Activated T-helper 2 cell treated with anti-CD3 and anti-CD28 coated beads, Interferon-gamma antibody, Interleukin-2, Interleukin-4, amounts not matched to agents 10 μg/mL and 5 μg/mL and 100 μg/mL, durations not matched to agents 14 hours and 24 hours and 36 hours (primary cell): ENCODE measurements at regions of chr2 and their contacts with region 1.

Region 1: GRCh38 chr2:203782262-203782976 is 76.0 kb downstream of the CD28 start:
- DNase-seq: peak; percentile 53
- H3K4me3 Mint-ChIP-seq: no peak overlapping the region
- H3K27ac Mint-ChIP-seq: peak overlapping the region; percentile 74
- H3K4me1 Mint-ChIP-seq: peaks cover 42% of the 10 kb centered on the region
- H3K27me3 Mint-ChIP-seq: no peaks in the 10 kb centered on the region

Region 2: DNA sequence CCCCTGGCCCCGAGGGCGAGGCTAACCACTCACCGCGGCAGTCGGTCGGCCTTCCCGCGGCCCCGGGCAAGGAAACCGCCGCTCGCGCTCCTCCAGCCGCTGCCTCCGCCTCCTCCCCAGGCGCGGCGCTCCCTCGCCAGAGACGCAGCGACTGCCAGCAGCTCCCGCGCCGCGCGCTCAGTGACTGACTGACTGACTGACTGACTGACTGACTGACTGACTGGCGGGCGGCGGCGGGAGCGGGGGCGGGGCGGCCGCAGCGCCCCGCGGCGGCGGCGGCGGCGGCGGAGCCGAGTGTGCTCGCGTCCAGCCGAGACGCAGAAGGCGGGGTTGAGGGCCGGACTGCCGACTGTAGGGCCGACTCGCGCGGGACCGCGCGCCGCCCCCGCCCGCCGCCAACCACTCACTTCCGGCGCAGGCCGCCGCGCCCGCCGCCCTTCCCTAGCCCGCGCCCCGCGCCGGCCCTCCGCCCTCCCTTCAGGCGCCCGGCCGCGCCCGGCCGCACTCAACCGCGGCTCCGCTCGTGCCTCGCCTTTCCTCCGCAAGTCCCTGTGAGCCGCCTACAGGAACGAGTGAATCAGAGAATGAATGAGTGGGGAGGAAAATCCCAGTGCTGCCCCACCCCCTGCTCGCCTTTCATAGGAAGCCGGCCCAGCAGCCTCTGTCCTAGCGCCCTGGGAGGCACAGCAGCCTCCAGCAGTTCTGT is 247.2 kb before region 1 on chr2 and contains the start of gene RAPH1:
- intact Hi-C with region 1: loop called (anchors 5 kb)
- DNase-seq: peak; percentile 50
- H3K4me3 Mint-ChIP-seq: peak within 1 kb of the TSS; percentile 87
- H3K27ac Mint-ChIP-seq: peak within 1 kb of the TSS; percentile 78
- H3K4me1 Mint-ChIP-seq: peaks cover 22% of the 10 kb centered on the region
- H3K27me3 Mint-ChIP-seq: peaks cover 57% of the 10 kb centered on the region
- total RNA-seq, gene RAPH1: 2.8 and 4.6 TPM in 2 replicates

Region 3: GRCh38 chr2:203656522-203657287 is 125.7 kb before region 1 on chr2:
- intact Hi-C with region 1: loop called (anchors 5 kb)
- DNase-seq: no peak
- H3K4me3 Mint-ChIP-seq: no peak overlapping the region
- H3K27ac Mint-ChIP-seq: no peak overlapping the region
- H3K4me1 Mint-ChIP-seq: peaks cover 38% of the 10 kb centered on the region
- H3K27me3 Mint-ChIP-seq: no peaks in the 10 kb centered on the region

Region 4: DNA sequence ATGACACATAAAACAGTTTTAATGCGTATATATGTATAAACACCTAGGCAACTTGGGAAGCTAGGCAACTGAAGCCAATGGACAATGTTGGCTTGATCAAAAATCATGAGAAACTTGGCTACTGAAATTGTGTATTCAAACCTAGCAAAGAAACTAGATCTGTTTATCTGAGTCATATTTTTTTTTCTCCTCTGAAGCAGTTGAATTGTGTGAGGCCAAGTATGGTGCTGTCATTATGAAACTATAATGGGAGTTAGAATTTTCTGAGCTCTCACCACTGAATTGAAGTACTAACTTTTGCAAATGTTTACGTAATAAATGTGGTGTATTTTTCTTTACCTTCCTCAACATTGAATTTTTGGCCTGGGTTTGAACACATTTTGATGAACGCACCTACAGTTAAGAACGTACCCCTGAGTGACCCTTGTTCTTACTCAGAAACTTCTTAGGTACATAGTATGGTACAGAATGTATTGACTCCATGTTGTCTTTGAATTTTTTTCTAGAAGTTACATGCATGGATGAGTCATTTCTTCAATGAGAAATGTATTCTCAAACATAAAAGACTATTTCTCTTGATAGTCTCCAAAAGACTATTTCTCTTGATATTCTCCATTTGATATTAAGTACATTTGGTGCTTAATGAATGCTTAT is 52.2 kb before region 1 on chr2:
- intact Hi-C with region 1: loop called (anchors 2 kb)
- DNase-seq: no peak
- H3K4me3 Mint-ChIP-seq: peak overlapping the region; percentile 1
- H3K27ac Mint-ChIP-seq: peak overlapping the region; percentile 83
- H3K4me1 Mint-ChIP-seq: peaks cover 75% of the 10 kb centered on the region
- H3K27me3 Mint-ChIP-seq: no peaks in the 10 kb centered on the region

Region 5: DNA sequence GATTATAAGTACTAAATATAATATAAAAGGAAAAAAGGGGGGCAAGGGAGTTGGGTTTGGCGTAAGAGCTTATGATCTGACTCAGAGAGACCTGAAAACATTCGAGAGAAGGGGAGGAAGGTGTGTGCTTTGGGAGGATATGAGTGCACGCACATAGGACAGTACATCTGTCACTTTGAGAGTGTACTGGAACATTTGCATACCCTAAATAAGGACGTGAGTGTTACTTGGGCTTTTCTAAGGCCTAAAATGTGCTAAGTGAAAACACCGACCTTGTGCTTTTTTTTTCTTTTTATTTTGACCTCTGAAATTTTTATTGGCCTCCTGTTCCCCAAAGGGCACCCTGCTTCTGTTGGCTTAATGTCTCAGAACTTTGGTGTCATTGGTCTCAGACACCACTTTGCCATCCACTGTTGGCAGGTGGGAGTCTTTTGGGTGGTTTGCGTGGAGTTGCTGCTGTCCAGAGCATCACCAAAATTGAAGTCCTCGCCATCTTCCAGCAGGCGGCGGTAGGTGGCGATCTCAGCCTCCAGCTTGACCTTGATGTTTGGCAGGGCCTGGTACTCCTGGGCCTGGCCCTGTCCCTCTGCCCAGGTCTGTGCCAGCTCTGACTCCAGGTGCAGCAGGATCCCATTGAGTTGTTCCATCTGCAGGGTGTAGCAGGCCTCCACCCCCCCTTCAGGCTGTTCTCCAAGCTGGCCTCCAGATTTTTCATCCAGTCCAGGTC is 18.3 kb before region 1 on chr2:
- intact Hi-C with region 1: loop called (anchors 1 kb)
- DNase-seq: no peak
- H3K4me3 Mint-ChIP-seq: no peak overlapping the region
- H3K27ac Mint-ChIP-seq: peak overlapping the region; percentile 86
- H3K4me1 Mint-ChIP-seq: peaks cover 51% of the 10 kb centered on the region
- H3K27me3 Mint-ChIP-seq: no peaks in the 10 kb centered on the region

Region 6: DNA sequence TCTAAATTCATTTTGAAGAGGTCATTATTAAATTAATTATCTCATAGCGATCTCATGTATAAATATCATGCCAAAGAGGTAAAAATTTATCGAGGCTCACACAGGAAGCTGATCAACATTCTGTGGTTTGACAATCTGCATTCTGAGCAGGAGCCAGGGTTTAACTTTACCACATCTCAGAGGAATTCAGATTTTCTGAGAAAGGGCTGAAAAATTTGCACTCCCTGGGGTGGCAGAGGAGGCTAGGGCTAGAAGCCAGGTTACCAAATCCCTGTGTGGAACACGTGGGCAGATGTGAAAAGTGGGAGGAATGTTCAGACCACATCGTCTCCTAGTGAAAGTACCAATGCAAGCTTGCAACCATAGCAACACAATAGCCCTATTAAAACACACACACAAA is 21.7 kb after region 1 on chr2:
- intact Hi-C with region 1: loop called (anchors 1 kb)
- DNase-seq: peak; percentile 36
- H3K4me3 Mint-ChIP-seq: no peak overlapping the region
- H3K27ac Mint-ChIP-seq: peak overlapping the region; percentile 61
- H3K4me1 Mint-ChIP-seq: peaks cover 68% of the 10 kb centered on the region
- H3K27me3 Mint-ChIP-seq: no peaks in the 10 kb centered on the region

Region 7: DNA sequence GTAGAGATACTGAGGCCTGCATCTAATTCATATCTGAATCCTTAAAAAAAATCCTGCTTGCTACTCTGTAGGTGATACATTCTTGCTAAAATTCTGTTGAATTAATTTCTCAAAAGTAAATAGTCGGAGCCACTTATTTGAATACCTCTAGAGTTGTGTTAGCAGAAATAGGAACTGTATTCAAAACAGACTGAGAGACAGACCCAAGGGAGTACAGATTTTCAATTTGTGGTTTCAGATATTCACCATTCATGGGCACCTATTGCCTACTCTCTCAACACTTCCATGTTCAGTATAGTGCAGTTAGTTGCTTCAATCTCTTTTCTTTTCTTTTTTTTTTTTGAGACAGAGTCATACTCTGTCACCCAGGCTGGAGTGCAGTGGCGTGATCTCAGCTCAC is 38.5 kb after region 1 on chr2:
- intact Hi-C with region 1: no loop called
- DNase-seq: no peak
- H3K4me3 Mint-ChIP-seq: no peak overlapping the region
- H3K27ac Mint-ChIP-seq: no peak overlapping the region
- H3K4me1 Mint-ChIP-seq: peaks cover 40% of the 10 kb centered on the region
- H3K27me3 Mint-ChIP-seq: no peaks in the 10 kb centered on the region